Pancreas (tissue), 10 donors: ENCODE measurements at regions of chr1 and their contacts with region 1.

Region 1: GRCh38 chr1:25997828-25998761 is at the start of gene PAFAH2:
- DNase-seq: peak; percentile 96 to 98 (median 97)
- ATAC-seq: peak; percentile 97 to 99 (median 98)
- H3K4me3 ChIP-seq: peak within 1 kb of the TSS; percentile 38 to 71 (median 58)
- H3K27ac ChIP-seq: peak within 1 kb of the TSS in 3 of 4 donors; percentile 57 to 86 (median 85)
- H3K4me1 ChIP-seq: peaks cover 0 to 14% (median 0%) of the 10 kb centered on the region in 3 donors
- H3K27me3 ChIP-seq: no peaks in the 10 kb centered on the region
- CTCF ChIP-seq: peak; percentile 91 to 95 (median 94)
- total RNA-seq, gene PAFAH2: 11.0 to 19.0 (median 13.7) TPM

Region 2: GRCh38 chr1:25837262-25837875 is 160.7 kb before region 1 on chr1:
- intact Hi-C with region 1: loop called (anchors 10 kb)
- DNase-seq: no peak
- ATAC-seq: peak; percentile 85 to 96 (median 94)
- H3K4me3 ChIP-seq: no peak overlapping the region
- H3K27ac ChIP-seq: peak overlapping the region in 2 of 4 donors; percentile 4 to 23
- H3K4me1 ChIP-seq: peaks cover 0 to 12% (median 0%) of the 10 kb centered on the region in 3 donors
- H3K27me3 ChIP-seq: no peaks in the 10 kb centered on the region
- CTCF ChIP-seq: peak in 3 of 4 donors; percentile 30 to 43 (median 39)